Activated CD4-positive, alpha-beta T cell treated with anti-CD3 and anti-CD28 coated beads for 36 hours (primary cell): ENCODE measurements at regions of chr11 and their contacts with region 1.

Region 1: DNA sequence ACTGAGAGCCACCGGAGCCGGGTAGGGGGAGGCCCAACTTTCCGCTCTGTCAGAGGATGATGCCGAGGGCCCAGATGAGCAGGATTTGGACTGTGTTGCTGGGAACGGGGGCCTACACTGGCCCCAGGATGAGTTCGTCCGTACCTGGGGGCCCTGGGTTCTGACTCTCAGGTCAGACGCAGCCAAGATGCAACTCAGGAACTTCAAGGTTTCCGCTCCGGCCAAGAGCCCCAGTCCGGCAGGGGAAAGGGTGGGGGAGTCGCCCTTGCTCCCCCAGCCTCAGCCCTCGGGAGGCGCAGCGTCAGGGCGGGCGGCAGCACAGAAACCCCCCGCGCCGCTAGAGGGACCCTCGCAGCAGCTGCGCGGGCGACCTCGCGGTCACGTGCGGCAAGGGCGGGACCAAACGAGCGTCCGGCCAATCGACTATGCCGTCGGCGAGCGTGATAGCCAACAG is 241 bp upstream of the ARL2 start:
- DNase-seq: peak; percentile 90
- ATAC-seq: peak; percentile 87
- H3K4me3 Mint-ChIP-seq: peak overlapping the region; percentile 83
- H3K27ac Mint-ChIP-seq: peak overlapping the region; percentile 96
- H3K4me1 Mint-ChIP-seq: peaks cover 25% of the 10 kb centered on the region
- H3K27me3 Mint-ChIP-seq: no peaks in the 10 kb centered on the region

Region 2: GRCh38 chr11:64846998-64847666 is 166.6 kb before region 1 on chr11:
- CTCF ChIA-PET with region 1: interaction called, 9 read pairs
- POLR2A ChIA-PET with region 1: no interaction called
- intact Hi-C with region 1: loop called (anchors 1 to 5 kb)
- DNase-seq: peak; percentile 96
- ATAC-seq: peak; percentile 75
- H3K4me3 Mint-ChIP-seq: no peak overlapping the region
- H3K27ac Mint-ChIP-seq: no peak overlapping the region
- H3K4me1 Mint-ChIP-seq: peaks cover 54% of the 10 kb centered on the region
- H3K27me3 Mint-ChIP-seq: no peaks in the 10 kb centered on the region

Region 3: GRCh38 chr11:64971421-64972233 is 42.1 kb before region 1 on chr11 and contains the start of gene MAJIN:
- CTCF ChIA-PET with region 1: interaction called, 10 read pairs
- POLR2A ChIA-PET with region 1: no interaction called
- intact Hi-C with region 1: loop called in 1 of 2 experiments (anchors 1 kb)
- DNase-seq: peak; percentile 96
- ATAC-seq: peak; percentile 48
- H3K4me3 Mint-ChIP-seq: peak within 1 kb of the TSS; percentile 63
- H3K27ac Mint-ChIP-seq: peak within 1 kb of the TSS; percentile 94
- H3K4me1 Mint-ChIP-seq: peaks cover 42% of the 10 kb centered on the region
- H3K27me3 Mint-ChIP-seq: no peaks in the 10 kb centered on the region
- total RNA-seq, gene MAJIN: 1.2 to 1.6 TPM

Region 4: DNA sequence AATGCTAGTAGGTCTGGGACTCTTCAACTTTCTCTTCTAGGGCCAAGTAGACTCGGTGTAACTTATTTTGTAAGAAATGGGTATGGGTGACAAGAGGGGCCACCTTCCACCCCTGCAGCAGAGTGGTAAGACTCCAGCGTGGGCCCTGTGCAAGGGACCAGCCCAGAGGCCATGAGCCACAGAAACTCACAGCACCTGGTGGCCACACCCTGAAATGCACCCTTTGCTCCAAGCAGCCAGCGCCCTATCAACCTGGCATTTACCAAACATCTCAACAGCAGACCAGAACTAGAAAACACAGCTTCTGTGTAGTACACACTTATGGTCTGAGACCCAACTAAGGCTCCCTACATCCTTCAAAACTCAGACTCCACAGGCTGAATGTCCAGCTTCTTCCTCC is 64.4 kb after region 1 on chr11:
- CTCF ChIA-PET with region 1: interaction called, 4 read pairs
- POLR2A ChIA-PET with region 1: interaction called, 3 read pairs
- intact Hi-C with region 1: loop called (anchors 1 kb)
- DNase-seq: peak; percentile 79
- ATAC-seq: peak; percentile 90
- H3K4me3 Mint-ChIP-seq: no peak overlapping the region
- H3K27ac Mint-ChIP-seq: peak overlapping the region; percentile 7
- H3K4me1 Mint-ChIP-seq: peaks cover 35% of the 10 kb centered on the region
- H3K27me3 Mint-ChIP-seq: no peaks in the 10 kb centered on the region

Region 5: DNA sequence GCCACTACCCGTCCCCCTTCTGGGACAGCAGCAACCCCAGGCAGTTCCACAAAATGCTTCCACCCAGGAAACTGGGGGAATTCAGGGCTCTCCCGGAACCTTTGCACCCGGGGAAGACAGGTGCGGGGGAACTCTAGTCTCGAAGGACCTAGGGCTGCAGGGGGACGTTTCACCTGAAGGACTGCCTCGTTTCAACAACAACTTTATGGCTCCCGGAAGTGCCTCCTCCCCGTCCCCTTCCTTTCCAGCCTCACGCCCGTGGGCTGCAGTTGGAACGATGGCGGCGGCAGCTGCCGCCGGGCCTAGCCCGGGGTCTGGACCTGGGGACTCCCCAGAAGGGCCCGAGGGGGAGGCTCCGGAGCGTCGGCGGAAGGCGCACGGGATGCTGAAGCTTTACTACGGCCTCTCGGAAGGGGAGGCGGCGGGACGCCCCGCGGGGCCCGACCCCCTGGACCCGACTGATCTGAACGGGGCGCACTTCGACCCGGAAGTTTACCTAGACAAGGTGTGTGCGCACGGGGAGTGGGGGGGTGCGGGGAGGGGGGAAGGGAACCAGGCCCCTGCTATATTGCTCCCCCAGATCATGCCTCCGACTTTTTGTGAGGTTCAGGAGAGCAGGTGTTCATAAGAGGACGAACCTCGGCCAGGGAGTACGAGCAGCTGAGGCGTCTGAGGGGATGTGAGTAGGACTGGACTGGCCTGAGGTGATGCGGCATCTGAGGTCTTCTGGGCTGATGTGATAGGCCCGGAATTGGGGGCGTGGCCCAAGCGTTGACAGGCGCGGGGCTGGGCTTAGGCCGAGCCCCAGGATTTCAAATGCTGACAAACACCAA is 82.5 kb after region 1 on chr11 and contains the start of gene VPS51:
- CTCF ChIA-PET with region 1: interaction called, 4 read pairs
- POLR2A ChIA-PET with region 1: no interaction called
- intact Hi-C with region 1: loop called (anchors 1 kb)
- DNase-seq: peak; percentile 93
- ATAC-seq: peak; percentile 98
- H3K4me3 Mint-ChIP-seq: peak within 1 kb of the TSS; percentile 92
- H3K27ac Mint-ChIP-seq: peak within 1 kb of the TSS; percentile 94
- H3K4me1 Mint-ChIP-seq: peaks cover 12% of the 10 kb centered on the region
- H3K27me3 Mint-ChIP-seq: no peaks in the 10 kb centered on the region
- total RNA-seq, gene VPS51: 94.3 to 123 TPM

Region 6: DNA sequence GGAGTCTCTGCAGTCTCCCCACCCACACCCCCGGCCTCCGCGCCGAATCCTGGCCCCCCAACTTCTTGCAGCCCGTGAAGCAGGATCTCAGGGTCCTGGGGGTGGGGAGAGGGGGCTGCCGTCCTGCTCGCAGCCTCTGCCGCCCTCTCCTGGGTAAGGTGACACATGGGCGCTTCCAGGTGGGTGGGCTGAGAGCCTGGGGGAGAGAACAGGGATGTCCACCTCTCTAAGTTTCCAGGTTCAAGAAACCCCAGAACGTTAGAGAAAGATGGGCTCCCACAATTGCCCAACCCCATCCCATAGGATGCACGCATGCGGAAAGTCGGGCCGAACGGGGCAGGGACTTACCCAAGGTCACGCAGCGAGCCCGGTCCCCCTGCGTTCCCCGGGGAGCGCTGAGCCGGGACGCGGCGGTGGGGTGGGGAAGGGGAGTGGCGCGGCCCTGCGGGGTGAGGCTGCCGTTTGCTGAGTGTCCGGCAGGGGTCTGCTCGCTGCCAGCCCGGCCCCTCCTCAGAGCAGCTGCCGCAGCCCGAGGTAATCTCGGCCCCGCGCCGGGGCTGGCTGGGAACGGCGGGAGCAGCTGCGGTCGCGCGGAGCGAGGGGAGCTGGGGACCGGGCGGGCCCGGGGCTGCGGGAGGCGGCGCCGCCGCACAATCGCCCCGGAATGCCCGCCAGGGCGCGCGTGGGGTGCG is 167.3 kb after region 1 on chr11:
- CTCF ChIA-PET with region 1: no interaction called
- POLR2A ChIA-PET with region 1: no interaction called
- intact Hi-C with region 1: loop called in 1 of 2 experiments (anchors 1 kb)
- DNase-seq: peak; percentile 79
- ATAC-seq: peak; percentile 74
- H3K4me3 Mint-ChIP-seq: peak overlapping the region; percentile 79
- H3K27ac Mint-ChIP-seq: peak overlapping the region; percentile 80
- H3K4me1 Mint-ChIP-seq: peaks cover 14% of the 10 kb centered on the region
- H3K27me3 Mint-ChIP-seq: no peaks in the 10 kb centered on the region